ENCODE measurements at regions of chr9 and their contacts with region 1.

Region 1: GRCh38 chr9:128540634-128541360 is 11.6 kb upstream of the SPTAN1 start:
- DNase-seq: no peak

Region 2: GRCh38 chr9:128455849-128456612 is 84.8 kb before region 1 on chr9 and contains the start of gene ODF2:
- intact Hi-C with region 1: loop called (anchors 10 kb)
- DNase-seq: peak; percentile 97 to 100 (median 99)

Region 3: DNA sequence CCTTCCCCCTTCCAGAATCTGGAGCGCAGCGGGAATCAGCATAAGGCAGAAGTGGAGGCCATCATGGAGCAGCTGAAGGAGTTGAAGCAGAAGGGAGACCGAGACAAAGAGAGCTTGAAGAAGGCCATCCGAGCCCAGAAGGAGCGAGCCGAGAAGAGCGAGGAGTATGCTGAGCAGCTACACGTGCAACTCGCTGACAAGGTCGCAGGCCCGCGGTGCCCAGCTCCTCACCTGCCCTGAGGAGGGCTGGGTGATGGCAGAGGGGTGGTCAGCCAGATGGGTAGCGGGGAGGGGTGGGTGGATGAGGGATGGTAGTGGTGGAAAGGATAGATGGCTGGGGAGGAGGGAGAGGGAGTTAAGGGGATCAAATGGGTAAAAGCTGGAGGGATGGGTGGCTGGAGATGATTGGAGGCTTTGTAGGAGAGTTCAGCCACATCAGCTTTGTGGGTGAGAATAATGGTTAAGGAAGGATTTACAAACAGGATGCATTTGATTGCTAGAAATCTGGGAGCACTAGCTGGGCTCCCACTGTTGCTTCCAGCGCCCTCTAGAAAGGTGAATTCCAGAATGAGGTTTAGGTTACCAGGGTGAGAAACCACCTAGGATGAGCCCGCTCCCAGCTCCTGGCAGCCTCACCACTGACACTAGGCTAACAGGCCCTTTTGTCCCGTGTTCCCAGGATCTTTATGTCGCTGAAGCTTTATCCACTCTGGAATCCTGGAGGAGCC is 55.9 kb before region 1 on chr9:
- intact Hi-C with region 1: no loop called
- DNase-seq: no peak

Region 4: DNA sequence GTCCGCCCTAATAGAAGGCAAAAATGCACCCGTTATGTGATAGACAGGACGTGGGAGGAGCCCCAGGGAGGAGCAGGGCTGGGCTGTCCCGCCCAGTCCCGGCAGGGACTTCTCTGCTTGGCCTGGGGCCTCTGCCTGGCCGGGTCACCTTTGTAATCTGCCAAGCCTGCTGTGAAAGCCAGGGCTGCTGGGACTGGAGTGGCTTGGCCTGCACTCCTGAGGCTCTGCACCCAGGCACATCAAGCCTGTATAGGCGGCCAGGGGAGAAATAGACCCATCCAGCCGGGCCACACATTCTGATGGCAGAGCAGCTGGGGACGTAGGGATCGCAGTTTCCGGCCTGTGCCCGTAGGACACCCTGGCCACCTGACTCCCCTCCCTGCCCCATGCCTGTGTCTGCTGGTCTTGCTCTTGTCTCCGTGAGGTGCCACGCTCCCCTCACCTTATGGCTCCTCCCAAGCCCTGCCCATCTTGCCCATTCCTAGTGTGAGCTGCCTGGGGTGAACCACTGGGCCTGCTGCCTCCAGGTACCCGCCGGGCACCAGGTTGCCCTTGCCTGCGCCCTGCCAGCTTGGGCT is 87.8 kb after region 1 on chr9:
- intact Hi-C with region 1: no loop called
- DNase-seq: peak in 23 of 42 donors; percentile 32 to 76 (median 60)

Region 5: DNA sequence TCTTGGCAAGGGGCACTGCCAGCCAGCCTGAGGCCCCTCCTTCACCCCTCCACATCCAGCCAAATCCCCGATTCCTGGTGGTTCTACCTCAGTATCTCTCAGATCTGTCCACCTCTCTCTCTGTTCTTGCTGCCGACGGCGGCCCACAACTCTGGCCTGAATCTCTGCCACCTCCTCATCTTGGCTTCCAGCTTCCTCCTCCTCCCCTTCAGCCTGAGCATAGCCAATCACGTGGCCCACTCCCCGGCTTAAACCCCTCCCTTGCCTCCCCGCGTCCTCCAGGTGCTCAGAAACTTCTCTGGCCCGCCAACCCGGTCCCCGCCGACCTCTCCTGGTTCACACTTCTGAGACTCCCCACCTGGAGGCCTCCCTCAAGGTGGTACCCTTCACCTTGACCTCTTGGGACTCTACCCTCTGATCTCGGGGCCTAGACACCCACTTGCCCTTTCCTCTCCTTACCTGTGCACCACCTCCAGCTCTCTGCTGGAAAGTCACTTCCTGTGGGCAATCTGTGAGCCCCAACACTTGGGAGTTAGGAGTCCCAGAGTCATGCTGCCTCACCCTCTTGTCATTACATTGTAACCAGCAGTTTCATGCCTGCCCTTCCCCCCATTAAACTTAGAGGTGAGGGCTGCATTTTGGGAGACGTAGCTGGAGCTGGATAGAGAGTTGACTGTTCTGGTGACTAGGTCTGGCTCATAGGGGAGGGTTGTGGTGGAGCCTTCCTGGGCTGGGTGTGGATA is 143.7 kb after region 1 on chr9:
- intact Hi-C with region 1: no loop called
- DNase-seq: peak in 35 of 42 donors; percentile 20 to 68 (median 48)